Left lung (tissue), 14 donors: ENCODE measurements at regions of chr12 and their contacts with region 1.

Region 1: DNA sequence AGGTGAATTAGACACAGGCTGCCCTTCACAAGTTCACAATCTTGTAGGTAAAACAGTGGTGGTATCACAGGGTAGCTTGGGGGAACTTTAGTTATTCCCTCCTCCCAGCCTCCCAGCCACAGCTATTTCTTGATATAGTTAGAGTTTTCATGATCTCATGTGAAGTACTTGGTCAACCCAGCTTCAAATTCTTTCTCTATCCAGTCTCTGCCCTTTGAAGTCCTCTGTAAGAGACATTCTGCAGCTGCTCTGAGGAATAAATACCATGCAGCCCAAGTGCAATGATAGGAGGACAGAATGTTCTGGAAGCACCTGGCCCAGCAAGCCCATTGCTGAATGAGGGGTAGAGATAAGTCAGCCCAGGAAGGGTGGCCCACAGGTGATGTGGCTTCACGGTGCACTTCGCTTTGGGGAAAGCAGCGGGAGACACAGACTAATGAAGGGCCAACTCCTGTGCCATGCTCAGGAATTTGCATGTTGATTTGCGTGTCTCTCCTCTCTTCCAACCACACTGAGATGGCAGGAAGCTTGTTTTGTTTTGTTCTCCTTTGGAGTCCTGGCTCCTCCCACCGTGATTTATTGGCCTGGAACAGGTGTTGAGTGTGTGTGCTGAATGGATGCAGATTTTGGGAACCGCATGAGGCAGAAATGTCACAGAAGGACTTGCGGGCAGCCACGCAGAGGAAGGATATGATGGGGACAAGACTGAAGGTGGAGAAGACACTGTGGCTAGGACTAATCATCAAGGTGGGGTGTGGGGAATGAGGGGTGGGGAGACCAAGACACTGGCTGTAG is 8.0 kb upstream of the TXNRD1 start:
- DNase-seq: no peak
- ATAC-seq: no peak
- H3K4me3 ChIP-seq: no peak overlapping the region
- H3K27ac ChIP-seq: no peak overlapping the region
- H3K4me1 ChIP-seq: no peaks in the 10 kb centered on the region
- H3K27me3 ChIP-seq: no peaks in the 10 kb centered on the region
- CTCF ChIP-seq: no peak

Region 2: DNA sequence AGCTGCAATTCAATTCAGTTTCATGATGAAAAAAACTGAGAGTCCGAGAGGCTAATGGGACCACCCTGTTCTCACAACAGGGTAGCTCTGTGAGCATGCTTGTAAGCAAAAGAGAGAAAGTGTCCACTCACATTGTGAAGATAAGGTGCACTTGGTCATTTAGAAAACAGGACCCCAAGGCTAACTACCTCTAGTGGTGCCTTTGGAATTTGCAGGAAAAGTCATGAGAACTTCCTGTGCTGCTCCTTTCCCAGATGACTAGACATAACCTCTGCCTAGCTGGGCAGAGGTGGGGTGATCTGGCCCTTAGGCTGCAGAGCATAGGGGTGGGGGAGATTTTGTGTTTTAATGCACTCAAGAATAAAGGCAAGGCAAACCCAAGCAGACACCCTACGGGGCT is 501.7 kb before region 1 on chr12:
- intact Hi-C with region 1: no loop called
- DNase-seq: no peak
- ATAC-seq: no peak
- H3K4me3 ChIP-seq: no peak overlapping the region
- H3K27ac ChIP-seq: no peak overlapping the region
- H3K4me1 ChIP-seq: no peaks in the 10 kb centered on the region
- H3K27me3 ChIP-seq: peaks cover 0 to 10% of the 10 kb centered on the region in 2 donors
- CTCF ChIP-seq: no peak

Region 3: DNA sequence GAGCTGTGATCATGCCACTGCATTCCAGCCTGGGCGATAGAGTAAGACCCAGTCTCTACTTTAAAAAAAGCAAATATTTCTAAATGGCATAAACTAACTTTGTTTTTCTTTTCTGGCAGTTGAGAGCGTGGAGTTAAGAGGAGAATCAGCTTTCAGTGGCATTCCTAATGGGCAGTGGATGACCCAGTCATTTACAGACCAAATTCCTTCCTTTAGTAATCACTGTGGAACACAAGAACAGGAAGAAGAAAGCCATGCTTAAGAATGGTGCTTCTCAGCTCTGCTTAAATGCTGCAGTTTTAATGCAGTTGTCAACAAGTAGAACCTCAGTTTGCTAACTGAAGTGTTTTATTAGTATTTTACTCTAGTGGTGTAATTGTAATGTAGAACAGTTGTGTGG is 220.8 kb before region 1 on chr12:
- intact Hi-C with region 1: no loop called
- DNase-seq: no peak
- ATAC-seq: no peak
- H3K4me3 ChIP-seq: no peak overlapping the region
- H3K27ac ChIP-seq: no peak overlapping the region
- H3K4me1 ChIP-seq: no peaks in the 10 kb centered on the region
- H3K27me3 ChIP-seq: no peaks in the 10 kb centered on the region
- CTCF ChIP-seq: no peak

Region 4: GRCh38 chr12:104358347-104359003 is 150.9 kb after region 1 on chr12:
- intact Hi-C with region 1: loop called in 1 of 2 experiments (anchors 5 kb)
- DNase-seq: peak in 2 of 4 donors; percentile 44 to 68
- ATAC-seq: peak; percentile 94
- H3K4me3 ChIP-seq: no peak overlapping the region
- H3K27ac ChIP-seq: no peak overlapping the region
- H3K4me1 ChIP-seq: no peaks in the 10 kb centered on the region
- H3K27me3 ChIP-seq: no peaks in the 10 kb centered on the region
- CTCF ChIP-seq: peak; percentile 69 to 82